ENCODE measurements at regions of chr11 and their contacts with region 1.

Region 1: DNA sequence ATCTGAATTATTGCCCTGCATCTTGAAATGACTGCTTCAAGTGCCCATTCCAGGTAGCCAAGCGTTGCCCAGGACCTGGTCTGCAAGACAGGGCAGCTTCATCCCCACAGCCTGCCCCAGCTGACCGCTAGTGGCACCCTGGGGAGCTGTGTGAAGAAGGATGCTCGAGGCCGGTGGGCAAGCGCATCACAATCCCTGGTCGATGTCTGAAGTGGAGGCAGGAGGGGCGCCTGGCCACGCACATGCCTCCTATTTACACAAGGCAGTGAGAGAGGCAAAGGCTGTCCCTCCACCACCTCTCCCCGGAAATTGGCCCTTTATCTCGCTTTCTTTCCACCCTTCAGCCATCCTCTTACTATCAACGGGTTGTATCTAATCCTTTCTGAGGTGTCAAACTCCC is 28.1 kb upstream of the PHF21A start:
- DNase-seq: no peak
- ATAC-seq: 0 out of 2 replicates have a peak, but pooled peaks have one; percentile 38
- H3K4me3 ChIP-seq: no peak overlapping the region
- H3K27ac ChIP-seq: no peak overlapping the region
- H3K4me1 ChIP-seq: no peaks in the 10 kb centered on the region
- H3K27me3 ChIP-seq: no peaks in the 10 kb centered on the region
- CTCF ChIP-seq: no peak

Region 2: GRCh38 chr11:46121724-46122477 is 27.4 kb before region 1 on chr11:
- CTCF ChIA-PET with region 1: no interaction called
- POLR2A ChIA-PET with region 1: interaction called, 11 read pairs
- in situ Hi-C with region 1: no loop called
- intact Hi-C with region 1: no loop called
- DNase-seq: no peak
- ATAC-seq: peak; percentile 66
- H3K4me3 ChIP-seq: peak overlapping the region; percentile 77 to 82
- H3K27ac ChIP-seq: peak overlapping the region; percentile 95
- H3K4me1 ChIP-seq: peaks cover 22% of the 10 kb centered on the region
- H3K27me3 ChIP-seq: no peaks in the 10 kb centered on the region
- CTCF ChIP-seq: no peak

Region 3: DNA sequence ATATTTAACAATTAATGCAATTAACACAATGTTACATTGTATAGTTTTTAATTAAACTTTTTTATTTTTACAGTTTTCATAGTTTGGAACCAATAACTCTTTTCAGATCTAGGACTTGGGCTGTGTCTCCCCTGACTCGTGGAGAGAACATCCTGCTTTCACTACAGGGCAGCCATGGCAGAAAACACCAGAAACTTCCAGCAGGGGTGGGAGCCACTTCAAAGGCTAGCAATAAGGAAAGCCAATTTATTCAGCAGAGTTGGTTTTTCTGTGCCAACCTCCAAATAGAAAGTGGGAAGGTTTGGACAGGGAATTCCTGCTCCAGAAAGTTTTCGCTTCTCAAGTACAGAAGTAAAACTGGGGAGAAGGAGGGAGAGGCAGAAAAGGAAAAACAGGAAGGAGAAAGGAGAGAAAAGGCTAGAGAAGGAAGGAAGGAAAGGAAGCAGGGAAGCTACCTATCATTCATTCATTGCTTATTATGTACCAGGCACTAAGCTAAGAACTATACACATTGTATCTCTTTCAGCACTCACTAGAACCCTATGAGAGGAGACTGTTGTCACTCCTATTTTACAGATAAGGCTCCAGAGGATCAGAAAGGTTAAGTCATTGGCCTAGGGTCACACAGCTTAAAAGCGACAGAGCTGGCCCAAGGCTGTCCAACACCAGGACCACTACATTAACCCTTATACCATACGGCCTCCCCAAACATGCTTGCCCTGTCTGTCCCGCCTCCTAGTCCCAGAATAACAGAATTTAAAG is 73.3 kb after region 1 on chr11:
- CTCF ChIA-PET with region 1: no interaction called
- POLR2A ChIA-PET with region 1: no interaction called
- in situ Hi-C with region 1: no loop called
- intact Hi-C with region 1: no loop called
- DNase-seq: no peak
- ATAC-seq: no peak; the same call in none of the 2 replicates
- H3K4me3 ChIP-seq: no peak overlapping the region
- H3K27ac ChIP-seq: no peak overlapping the region
- H3K4me1 ChIP-seq: no peaks in the 10 kb centered on the region
- H3K27me3 ChIP-seq: no peaks in the 10 kb centered on the region
- CTCF ChIP-seq: no peak

Measured in Panc1 (cell line).